ENCODE measurements at regions of chr14 and their contacts with region 1.

Region 1: DNA sequence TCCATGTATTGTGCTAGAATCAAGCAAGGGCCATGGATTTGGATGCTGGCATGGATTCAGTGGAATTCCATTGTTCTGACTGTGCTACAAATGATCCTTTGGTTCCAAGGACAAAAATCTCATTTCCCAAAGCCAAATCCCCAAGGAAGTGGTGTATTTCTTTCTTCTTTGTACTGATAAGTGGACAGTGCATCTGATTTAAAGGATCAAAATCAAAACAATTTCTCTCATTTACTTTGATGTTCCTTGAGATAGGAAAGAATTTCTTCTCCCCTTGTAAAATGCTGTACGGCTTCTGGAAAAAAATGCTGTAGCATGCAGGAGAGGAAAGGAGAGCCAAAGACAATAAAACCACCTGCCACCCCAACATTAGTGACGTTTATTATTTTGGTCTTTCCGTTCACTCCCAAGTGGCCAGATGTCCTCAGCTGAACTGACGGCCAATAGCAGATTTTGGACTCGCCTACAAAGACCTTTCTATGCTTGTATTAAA is 185.7 kb downstream of the PRKD1 start:
- DNase-seq: peak in 1 of 2 donors; percentile 65
- ATAC-seq: peak; percentile 70 to 91 (median 82)
- H3K4me3 ChIP-seq: peak overlapping the region in 3 of 10 donors; percentile 6 to 16 (median 7)
- H3K27ac ChIP-seq: peak overlapping the region in 8 of 10 donors; percentile 18 to 51 (median 29)
- H3K4me1 ChIP-seq: peaks cover 0 to 76% (median 44%) of the 10 kb centered on the region in 9 donors
- H3K27me3 ChIP-seq: no peaks in the 10 kb centered on the region
- CTCF ChIP-seq: no peak

Region 2: GRCh38 chr14:29663281-29663801 is 78.6 kb before region 1 on chr14:
- intact Hi-C with region 1: loop called in 1 of 10 experiments (anchors 10 kb)
- DNase-seq: no peak
- ATAC-seq: no peak
- H3K4me3 ChIP-seq: no peak overlapping the region
- H3K27ac ChIP-seq: no peak overlapping the region
- H3K4me1 ChIP-seq: no peaks in the 10 kb centered on the region
- H3K27me3 ChIP-seq: no peaks in the 10 kb centered on the region
- CTCF ChIP-seq: no peak

Region 3: GRCh38 chr14:29798108-29798663 is 56.2 kb after region 1 on chr14:
- intact Hi-C with region 1: no loop called
- DNase-seq: no peak
- ATAC-seq: no peak
- H3K4me3 ChIP-seq: no peak overlapping the region
- H3K27ac ChIP-seq: no peak overlapping the region
- H3K4me1 ChIP-seq: peaks cover 0 to 5% (median 0%) of the 10 kb centered on the region in 9 donors
- H3K27me3 ChIP-seq: no peaks in the 10 kb centered on the region
- CTCF ChIP-seq: no peak

Region 4: GRCh38 chr14:29892327-29892726 is 150.4 kb after region 1 on chr14:
- intact Hi-C with region 1: no loop called
- DNase-seq: no peak
- ATAC-seq: no peak
- H3K4me3 ChIP-seq: no peak overlapping the region
- H3K27ac ChIP-seq: no peak overlapping the region
- H3K4me1 ChIP-seq: peaks cover 0 to 11% (median 0%) of the 10 kb centered on the region in 9 donors
- H3K27me3 ChIP-seq: no peaks in the 10 kb centered on the region
- CTCF ChIP-seq: no peak

Measured in heart right ventricle (tissue), 16 donors.